K562 (cell line): ENCODE measurements at regions of chr15 and their contacts with region 1.

Region 1: DNA sequence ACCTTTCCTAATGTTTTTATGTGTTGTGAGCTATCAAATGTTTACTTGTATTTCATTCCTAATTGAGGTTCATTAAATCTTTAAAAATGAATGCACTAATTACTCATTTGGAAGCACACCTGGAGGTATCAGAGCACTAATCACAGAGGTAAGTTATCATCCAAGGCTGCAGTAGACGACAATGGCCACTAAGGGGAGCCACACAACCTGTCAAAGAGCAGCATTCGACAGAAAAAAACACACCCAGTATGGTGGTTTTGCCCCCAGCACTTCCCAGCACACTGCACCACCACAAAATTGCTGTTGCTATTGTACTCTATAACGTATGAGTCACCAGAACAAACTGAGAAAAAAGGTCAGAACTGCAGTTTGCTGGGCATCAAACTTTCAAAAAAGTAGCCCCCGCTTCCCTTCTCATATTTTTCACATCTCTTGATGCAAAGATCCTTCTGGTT is 205.9 kb upstream of the IGF1R start:
- DNase-seq: peak; percentile 47 to 66 (median 57)
- ATAC-seq: peak; percentile 86
- H3K4me3 ChIP-seq: no peak overlapping the region
- H3K27ac ChIP-seq: no peak overlapping the region
- H3K4me1 ChIP-seq: no peaks in the 10 kb centered on the region
- H3K27me3 ChIP-seq: peaks cover 0 to 9% of the 10 kb centered on the region in 2 experiments; a peak in 1 of 5 replicates
- CTCF ChIP-seq: peak; percentile 63 to 79 (median 73)
- EP300 ChIP-seq: no peak
- POLR2A ChIP-seq: no peak
- RAD21 ChIP-seq: peak; percentile 47 to 64

Region 2: GRCh38 chr15:98881526-98882520 is 439.4 kb after region 1 on chr15:
- CTCF ChIA-PET with region 1: no interaction called
- POLR2A ChIA-PET with region 1: no interaction called
- in situ Hi-C with region 1: no loop called
- intact Hi-C with region 1: loop called (anchors 10 kb)
- DNase-seq: peak; percentile 41 to 50 (median 46)
- ATAC-seq: peak; percentile 76
- H3K4me3 ChIP-seq: no peak overlapping the region
- H3K27ac ChIP-seq: no peak overlapping the region
- H3K4me1 ChIP-seq: no peaks in the 10 kb centered on the region; a peak in 1 of 5 replicates
- H3K27me3 ChIP-seq: peaks cover 10 to 26% of the 10 kb centered on the region in 2 experiments; a peak in 4 of 5 replicates
- CTCF ChIP-seq: peak; percentile 44 to 57 (median 56); a peak in 5 of 6 replicates
- EP300 ChIP-seq: no peak
- POLR2A ChIP-seq: no peak
- RAD21 ChIP-seq: peak; percentile 21 to 57; a peak in 3 of 4 replicates

Region 3: GRCh38 chr15:99076552-99077308 is 634.3 kb after region 1 on chr15:
- CTCF ChIA-PET with region 1: interaction called, 3 read pairs
- POLR2A ChIA-PET with region 1: no interaction called
- in situ Hi-C with region 1: no loop called
- intact Hi-C with region 1: loop called (anchors 1 kb)
- DNase-seq: peak; percentile 58 to 68 (median 62)
- ATAC-seq: peak; percentile 93
- H3K4me3 ChIP-seq: no peak overlapping the region
- H3K27ac ChIP-seq: no peak overlapping the region
- H3K4me1 ChIP-seq: no peaks in the 10 kb centered on the region
- H3K27me3 ChIP-seq: peaks cover 0 to 2% of the 10 kb centered on the region in 2 experiments; a peak in 1 of 5 replicates
- CTCF ChIP-seq: peak; percentile 77 to 84 (median 81)
- EP300 ChIP-seq: no peak
- POLR2A ChIP-seq: no peak
- RAD21 ChIP-seq: peak; percentile 62 to 87